ENCODE measurements at regions of chr10 and their contacts with region 1.

Region 1: GRCh38 chr10:29585488-29585980 is 49.2 kb downstream of the SVIL start:
- H3K4me3 ChIP-seq: no peak overlapping the region
- H3K27ac ChIP-seq: no peak overlapping the region
- H3K4me1 ChIP-seq: peaks cover 16% of the 10 kb centered on the region; the same call in 1 of the 2 replicates
- CTCF ChIP-seq: no peak

Region 2: GRCh38 chr10:29600821-29601220 is 15.3 kb after region 1 on chr10:
- CTCF ChIA-PET with region 1: interaction called, 15 read pairs
- POLR2A ChIA-PET with region 1: no interaction called
- H3K4me3 ChIP-seq: no peak overlapping the region
- H3K27ac ChIP-seq: no peak overlapping the region
- H3K4me1 ChIP-seq: no peaks in the 10 kb centered on the region
- CTCF ChIP-seq: no peak